Esophagus squamous epithelium (tissue), 5 donors: ENCODE measurements at regions of chr20 and their contacts with region 1.

Region 1: DNA sequence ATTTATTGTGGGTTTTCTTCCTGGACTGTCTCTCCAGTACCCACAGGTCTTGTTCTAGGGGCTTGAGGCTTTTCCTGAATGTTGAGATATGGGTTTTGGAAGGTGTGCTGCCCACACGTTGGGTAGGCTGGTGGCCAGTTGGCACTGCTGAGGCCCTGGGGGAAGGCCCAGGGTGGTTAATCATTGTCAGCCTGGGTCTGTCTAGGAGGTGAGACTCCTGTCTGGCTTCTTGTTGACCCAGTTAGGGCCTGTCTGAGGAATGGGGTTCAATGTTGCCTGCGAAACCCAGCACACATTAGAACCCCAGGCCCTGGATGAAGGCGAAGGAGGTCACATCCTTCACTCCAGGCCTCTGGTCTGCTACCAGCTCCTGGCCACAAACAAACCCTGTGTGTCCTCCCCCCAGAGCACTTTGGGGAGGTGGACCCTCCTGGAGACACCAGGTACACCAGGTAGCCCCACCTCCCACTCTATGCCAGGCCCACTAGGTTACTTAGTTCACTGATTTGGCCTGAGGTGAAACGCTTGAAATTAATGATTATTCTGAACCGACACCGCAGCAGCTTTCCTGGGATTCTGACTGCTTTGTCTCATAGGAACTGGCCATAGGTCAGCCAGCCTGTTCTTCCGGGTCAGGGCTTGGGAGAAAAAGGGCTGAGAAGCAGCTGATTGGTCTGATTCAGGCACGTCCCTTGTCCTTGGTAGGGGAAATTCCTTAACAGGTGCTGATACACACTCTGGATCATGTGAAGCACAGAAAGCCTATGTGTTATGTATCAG is 15.2 kb downstream of the DNMT3B start:
- DNase-seq: no peak
- H3K4me3 ChIP-seq: no peak overlapping the region
- H3K27ac ChIP-seq: no peak overlapping the region
- H3K4me1 ChIP-seq: peaks cover 0 to 22% (median 0%) of the 10 kb centered on the region in 3 donors
- H3K27me3 ChIP-seq: no peaks in the 10 kb centered on the region
- CTCF ChIP-seq: no peak
- POLR2A ChIP-seq: no peak

Region 2: GRCh38 chr20:32674362-32674789 is 103.0 kb before region 1 on chr20:
- intact Hi-C with region 1: loop called (anchors 2 kb)
- DNase-seq: no peak
- H3K4me3 ChIP-seq: no peak overlapping the region
- H3K27ac ChIP-seq: no peak overlapping the region
- H3K4me1 ChIP-seq: peaks cover 0 to 13% (median 3%) of the 10 kb centered on the region in 3 donors
- H3K27me3 ChIP-seq: no peaks in the 10 kb centered on the region
- CTCF ChIP-seq: peak; percentile 49 to 86 (median 72)
- POLR2A ChIP-seq: no peak